AG04450 (cell line): ENCODE measurements at regions of chr10 and their contacts with region 1.

Region 1: GRCh38 chr10:18205098-18205834 is 65.0 kb downstream of the CACNB2 start:
- DNase-seq: no peak
- H3K4me3 ChIP-seq: no peak overlapping the region
- H3K27ac ChIP-seq: no peak overlapping the region
- H3K27me3 ChIP-seq: no peaks in the 10 kb centered on the region
- CTCF ChIP-seq: no peak

Region 2: DNA sequence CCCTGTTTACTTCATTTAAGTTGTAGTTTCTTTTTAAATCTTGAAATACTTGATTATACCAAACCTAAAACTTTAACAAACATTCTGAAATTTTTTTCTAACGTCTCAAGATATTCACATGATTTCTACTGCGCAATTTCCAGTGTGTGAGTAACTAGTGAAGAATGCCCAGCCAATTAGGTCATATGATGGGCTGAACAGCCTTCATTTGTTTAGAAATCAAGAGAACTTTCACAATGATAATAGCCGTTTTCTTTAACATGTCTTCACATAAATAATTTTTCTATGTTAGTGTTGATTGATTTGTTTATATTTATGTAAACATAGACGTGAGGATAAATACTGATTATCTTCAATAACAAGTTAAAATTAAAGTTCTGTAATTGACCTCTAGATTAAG is 539.5 kb before region 1 on chr10:
- CTCF ChIA-PET with region 1: no interaction called
- POLR2A ChIA-PET with region 1: no interaction called
- DNase-seq: peak; percentile 78
- H3K4me3 ChIP-seq: no peak overlapping the region
- H3K27ac ChIP-seq: no peak overlapping the region
- H3K27me3 ChIP-seq: no peaks in the 10 kb centered on the region
- CTCF ChIP-seq: no peak

Region 3: GRCh38 chr10:17847585-17848296 is 357.5 kb before region 1 on chr10:
- CTCF ChIA-PET with region 1: interaction called, 14 read pairs
- POLR2A ChIA-PET with region 1: no interaction called
- DNase-seq: no peak
- H3K4me3 ChIP-seq: no peak overlapping the region
- H3K27ac ChIP-seq: no peak overlapping the region
- H3K27me3 ChIP-seq: peaks cover 2% of the 10 kb centered on the region
- CTCF ChIP-seq: peak; percentile 63

Region 4: DNA sequence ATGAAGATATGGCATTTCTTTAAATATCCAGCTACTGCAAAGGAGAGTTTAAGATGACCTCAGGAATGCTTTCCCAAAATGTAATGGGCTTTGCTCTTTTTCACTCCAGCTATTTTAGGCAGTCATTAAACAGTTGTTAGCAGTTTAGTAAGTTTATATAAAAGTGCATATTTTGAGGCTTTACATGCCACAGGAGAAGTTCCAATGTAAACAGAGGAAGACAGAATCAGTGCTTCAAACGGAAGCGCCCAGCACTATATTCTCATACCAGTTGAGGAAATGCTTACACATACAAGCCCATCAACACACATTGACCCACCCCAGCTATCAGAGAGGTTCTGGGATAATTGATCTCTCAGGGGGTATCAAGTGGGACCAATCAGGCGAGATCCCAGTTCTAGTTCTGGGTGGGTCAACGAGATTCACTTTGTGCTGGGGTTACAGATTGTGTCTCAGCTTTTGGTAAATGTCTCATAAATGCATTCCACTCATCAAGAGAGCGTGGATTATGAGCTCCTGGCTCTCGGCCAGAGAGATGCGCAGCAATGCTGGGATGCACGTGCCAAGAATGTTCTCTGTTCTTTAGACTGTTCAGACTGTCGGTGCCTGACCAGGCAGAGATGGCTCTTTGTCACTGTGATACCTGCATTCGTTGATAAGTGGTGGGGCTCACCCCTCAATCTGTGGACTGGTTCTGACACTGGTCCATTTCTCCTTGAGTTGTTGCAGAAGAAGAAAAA is 10.0 kb before region 1 on chr10:
- CTCF ChIA-PET with region 1: interaction called, 3 read pairs
- POLR2A ChIA-PET with region 1: interaction called, 12 read pairs
- DNase-seq: peak; percentile 37
- H3K4me3 ChIP-seq: no peak overlapping the region
- H3K27ac ChIP-seq: no peak overlapping the region
- H3K27me3 ChIP-seq: no peaks in the 10 kb centered on the region
- CTCF ChIP-seq: no peak

Region 5: DNA sequence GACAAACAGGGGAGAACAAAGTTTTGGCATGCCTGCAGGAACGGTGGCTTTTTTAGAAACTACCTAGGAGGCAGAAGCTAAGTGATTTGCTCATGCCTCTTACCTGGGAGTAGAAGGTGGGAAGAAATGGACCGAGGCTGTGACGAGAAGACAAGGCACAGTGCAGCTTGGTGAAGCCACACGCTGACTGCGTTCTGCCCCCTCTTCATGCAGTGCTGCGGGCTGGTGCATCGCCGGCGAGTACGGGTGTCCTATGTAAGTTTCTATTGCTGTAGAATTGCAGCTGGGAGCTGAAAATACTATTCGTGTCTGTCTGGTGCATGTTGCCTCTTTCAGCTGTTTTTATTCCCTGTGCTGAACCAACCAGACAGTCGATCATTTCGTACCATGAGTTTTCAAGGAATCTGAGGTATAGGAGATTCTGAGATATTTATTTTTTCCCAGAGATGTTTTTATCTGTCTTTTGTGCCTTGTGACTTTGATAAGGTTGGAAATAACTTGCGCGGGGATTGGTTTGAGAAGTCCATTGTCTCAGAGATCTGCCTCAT is 55.9 kb after region 1 on chr10:
- CTCF ChIA-PET with region 1: no interaction called
- POLR2A ChIA-PET with region 1: no interaction called
- DNase-seq: no peak
- H3K4me3 ChIP-seq: no peak overlapping the region
- H3K27ac ChIP-seq: no peak overlapping the region
- H3K27me3 ChIP-seq: no peaks in the 10 kb centered on the region
- CTCF ChIP-seq: no peak

Region 6: DNA sequence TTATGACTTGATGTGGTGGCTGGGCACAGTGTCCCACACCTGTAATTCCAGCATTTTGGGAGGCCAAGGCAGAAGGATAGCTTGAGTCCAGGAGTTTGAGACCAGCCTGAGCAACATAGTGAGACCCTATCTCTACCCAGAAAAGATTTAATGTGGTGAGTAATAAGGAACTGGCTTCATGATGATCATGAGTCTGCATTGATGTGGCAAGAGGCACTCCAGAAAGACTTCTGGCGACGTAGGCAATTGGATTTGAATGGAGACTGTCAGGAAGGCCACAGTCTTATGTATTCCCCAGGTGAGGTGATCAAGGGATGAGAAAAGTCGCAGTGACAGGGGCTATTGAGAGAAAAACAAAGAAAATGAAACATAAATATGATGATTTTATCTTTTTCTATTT is 72.9 kb after region 1 on chr10:
- CTCF ChIA-PET with region 1: no interaction called
- POLR2A ChIA-PET with region 1: no interaction called
- DNase-seq: no peak
- H3K4me3 ChIP-seq: no peak overlapping the region
- H3K27ac ChIP-seq: no peak overlapping the region
- H3K27me3 ChIP-seq: no peaks in the 10 kb centered on the region
- CTCF ChIP-seq: no peak